ENCODE measurements at regions of chr7 and their contacts with region 1.

Region 1: GRCh38 chr7:24572997-24573625 is at the start of gene PALS2:
- DNase-seq: peak; percentile 73
- H3K4me3 Mint-ChIP-seq: peak within 1 kb of the TSS; percentile 99
- H3K27ac Mint-ChIP-seq: peak within 1 kb of the TSS; percentile 95
- H3K4me1 Mint-ChIP-seq: peaks cover 19% of the 10 kb centered on the region
- H3K27me3 Mint-ChIP-seq: peaks cover 28% of the 10 kb centered on the region
- CTCF ChIP-seq: no peak
- total RNA-seq, gene PALS2: 36.3 and 45.9 TPM in 2 replicates

Region 2: GRCh38 chr7:23863209-23863798 is 709.8 kb before region 1 on chr7:
- CTCF ChIA-PET with region 1: no interaction called
- POLR2A ChIA-PET with region 1: no interaction called
- intact Hi-C with region 1: loop called (anchors 5 kb)
- DNase-seq: peak; percentile 50
- H3K4me3 Mint-ChIP-seq: no peak overlapping the region
- H3K27ac Mint-ChIP-seq: no peak overlapping the region
- H3K4me1 Mint-ChIP-seq: peaks cover 13% of the 10 kb centered on the region
- H3K27me3 Mint-ChIP-seq: no peaks in the 10 kb centered on the region
- CTCF ChIP-seq: peak; percentile 80

Region 3: DNA sequence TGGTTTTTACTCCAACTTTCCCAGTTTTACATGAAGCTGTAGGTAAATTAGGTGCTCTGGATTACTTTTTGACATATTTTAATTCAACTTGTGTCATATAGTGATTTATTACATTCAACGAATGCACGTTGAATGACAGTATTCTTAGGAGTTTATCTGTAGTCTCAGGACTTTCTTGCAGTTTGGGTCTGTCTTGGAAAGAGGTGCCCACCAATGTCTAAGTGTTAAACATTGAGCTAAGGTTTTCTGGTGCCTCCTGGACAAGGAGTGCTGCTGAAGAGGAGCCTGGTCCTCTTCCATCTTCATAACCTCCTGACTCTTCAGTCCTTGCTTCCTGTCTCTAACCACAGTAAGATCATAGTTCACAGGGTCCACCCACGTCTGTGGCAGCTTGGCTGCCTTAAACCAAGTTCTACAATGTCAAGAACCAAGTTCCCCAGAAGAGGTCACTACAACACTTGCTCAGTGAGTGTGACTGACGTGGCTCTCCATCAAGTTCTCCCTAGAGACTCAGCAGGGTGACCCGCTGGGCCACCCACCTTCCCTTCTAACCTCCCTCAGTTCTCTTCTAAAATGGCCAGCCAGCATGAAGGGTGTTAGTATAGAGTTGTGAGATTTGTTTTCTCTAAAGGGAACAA is 283.0 kb before region 1 on chr7:
- CTCF ChIA-PET with region 1: interaction called, 3 read pairs
- POLR2A ChIA-PET with region 1: no interaction called
- intact Hi-C with region 1: loop called (anchors 2 kb)
- DNase-seq: peak; percentile 74
- H3K4me3 Mint-ChIP-seq: no peak overlapping the region
- H3K27ac Mint-ChIP-seq: no peak overlapping the region
- H3K4me1 Mint-ChIP-seq: peaks cover 6% of the 10 kb centered on the region
- H3K27me3 Mint-ChIP-seq: peaks cover 14% of the 10 kb centered on the region
- CTCF ChIP-seq: peak; percentile 64

Region 4: GRCh38 chr7:24401628-24402593 is 171.2 kb before region 1 on chr7:
- CTCF ChIA-PET with region 1: interaction called, 3 read pairs
- POLR2A ChIA-PET with region 1: interaction called, 3 read pairs
- intact Hi-C with region 1: loop called (anchors 5 kb)
- DNase-seq: peak; percentile 39
- H3K4me3 Mint-ChIP-seq: peak overlapping the region; percentile 43
- H3K27ac Mint-ChIP-seq: no peak overlapping the region
- H3K4me1 Mint-ChIP-seq: peaks cover 15% of the 10 kb centered on the region
- H3K27me3 Mint-ChIP-seq: no peaks in the 10 kb centered on the region
- CTCF ChIP-seq: peak; percentile 32

Region 5: GRCh38 chr7:24637706-24638105 is 64.6 kb after region 1 on chr7:
- CTCF ChIA-PET with region 1: no interaction called
- POLR2A ChIA-PET with region 1: interaction called, 11 read pairs
- intact Hi-C with region 1: no loop called
- DNase-seq: no peak
- H3K4me3 Mint-ChIP-seq: no peak overlapping the region
- H3K27ac Mint-ChIP-seq: no peak overlapping the region
- H3K4me1 Mint-ChIP-seq: no peaks in the 10 kb centered on the region
- H3K27me3 Mint-ChIP-seq: no peaks in the 10 kb centered on the region
- CTCF ChIP-seq: no peak

Region 6: DNA sequence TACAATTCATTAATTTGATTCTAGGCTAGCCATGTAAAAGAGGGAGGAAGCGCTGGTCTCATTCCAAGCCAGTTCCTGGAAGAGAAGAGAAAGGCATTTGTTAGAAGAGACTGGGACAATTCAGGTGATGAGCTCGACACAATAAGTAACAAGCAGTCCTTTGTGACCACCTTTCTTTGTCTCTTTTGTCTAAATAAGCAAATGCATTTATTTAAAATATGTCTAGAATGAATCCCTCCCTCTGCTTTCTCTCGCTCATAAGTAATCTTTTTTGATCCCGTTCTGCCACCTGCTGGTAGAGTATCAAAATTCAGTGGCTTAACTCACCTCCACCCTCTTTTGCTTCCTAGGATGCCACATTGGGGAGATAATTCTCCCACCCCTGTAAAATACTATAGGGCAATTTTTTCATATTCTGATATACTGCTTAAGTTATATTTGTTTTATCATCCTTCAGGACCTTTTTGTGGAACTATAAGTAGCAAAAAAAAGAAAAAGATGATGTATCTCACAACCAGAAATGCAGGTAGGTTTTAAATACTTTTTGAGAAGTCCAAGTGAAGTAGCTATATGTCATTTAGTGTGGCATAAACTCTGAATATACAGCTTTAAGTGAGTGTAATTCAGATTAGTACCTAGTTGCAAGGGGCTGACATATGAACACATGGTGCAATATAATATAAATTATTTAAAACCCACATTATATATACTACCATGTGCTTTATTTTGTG is 92.6 kb after region 1 on chr7:
- CTCF ChIA-PET with region 1: interaction called, 60 read pairs
- POLR2A ChIA-PET with region 1: interaction called, 47 read pairs
- intact Hi-C with region 1: loop called (anchors 1 kb)
- DNase-seq: peak; percentile 68
- H3K4me3 Mint-ChIP-seq: no peak overlapping the region
- H3K27ac Mint-ChIP-seq: no peak overlapping the region
- H3K4me1 Mint-ChIP-seq: peaks cover 21% of the 10 kb centered on the region
- H3K27me3 Mint-ChIP-seq: no peaks in the 10 kb centered on the region
- CTCF ChIP-seq: peak; percentile 63

Region 7: GRCh38 chr7:24778543-24779282 is 205.6 kb after region 1 on chr7:
- CTCF ChIA-PET with region 1: no interaction called
- POLR2A ChIA-PET with region 1: no interaction called
- intact Hi-C with region 1: loop called (anchors 10 kb)
- DNase-seq: peak; percentile 69
- H3K4me3 Mint-ChIP-seq: no peak overlapping the region
- H3K27ac Mint-ChIP-seq: peak overlapping the region; percentile 87
- H3K4me1 Mint-ChIP-seq: peaks cover 25% of the 10 kb centered on the region
- H3K27me3 Mint-ChIP-seq: no peaks in the 10 kb centered on the region
- CTCF ChIP-seq: no peak

Measured in MCF 10A (cell line).